Prostate gland (tissue), 2 donors: ENCODE measurements at regions of chr9 and their contacts with region 1.

Region 1: GRCh38 chr9:123401879-123402513 is 46.0 kb downstream of the CRB2 start:
- DNase-seq: no peak
- H3K4me3 ChIP-seq: no peak overlapping the region
- H3K27ac ChIP-seq: peak overlapping the region; percentile 8 to 12
- H3K4me1 ChIP-seq: no peaks in the 10 kb centered on the region
- H3K27me3 ChIP-seq: no peaks in the 10 kb centered on the region
- CTCF ChIP-seq: peak in 3 of 4 experiments; percentile 37 to 60 (median 57)
- POLR2A ChIP-seq: no peak

Region 2: DNA sequence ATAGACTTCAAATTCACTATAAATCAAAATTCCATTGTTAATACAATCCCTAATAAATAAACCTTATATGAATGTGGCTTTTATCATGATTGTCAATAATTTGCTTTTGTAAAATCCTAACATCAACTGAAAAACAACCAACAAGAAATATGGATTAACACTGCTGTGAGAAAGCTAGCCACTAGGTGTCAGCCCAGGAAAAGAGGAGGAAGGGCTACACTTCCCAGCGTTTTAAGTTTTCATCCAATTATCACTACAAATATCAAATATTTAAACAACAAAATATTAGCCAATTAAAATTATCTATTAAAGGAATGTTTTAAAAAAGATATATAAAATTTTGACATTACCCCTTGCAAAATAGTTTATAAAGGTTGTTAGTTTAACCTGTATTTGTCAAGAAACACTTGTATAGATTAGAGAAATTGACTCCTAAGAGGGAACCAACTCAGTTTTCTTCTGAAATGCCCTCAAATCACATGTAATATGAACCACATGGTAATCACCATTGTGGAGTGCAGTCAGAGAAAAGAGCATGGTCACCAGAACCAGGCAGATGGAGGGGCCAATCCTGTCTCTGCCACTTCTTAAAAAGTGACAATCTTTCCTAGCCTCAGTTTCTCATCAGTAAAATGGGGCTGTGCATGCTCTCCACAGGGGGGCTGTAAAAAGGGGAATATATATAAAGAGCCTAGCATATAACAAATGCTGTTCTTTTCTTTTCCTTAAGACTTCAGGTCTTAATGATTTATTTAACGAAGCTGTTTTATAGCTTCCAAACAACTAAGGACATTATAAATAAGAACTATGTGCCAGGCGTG is 142.2 kb after region 1 on chr9:
- intact Hi-C with region 1: loop called (anchors 5 kb)
- DNase-seq: no peak
- H3K4me3 ChIP-seq: no peak overlapping the region
- H3K27ac ChIP-seq: no peak overlapping the region
- H3K4me1 ChIP-seq: no peaks in the 10 kb centered on the region
- H3K27me3 ChIP-seq: no peaks in the 10 kb centered on the region
- CTCF ChIP-seq: peak; percentile 41 to 78 (median 70)
- POLR2A ChIP-seq: no peak

Region 3: GRCh38 chr9:123724211-123724796 is 322.3 kb after region 1 on chr9:
- intact Hi-C with region 1: loop called (anchors 10 kb)
- DNase-seq: no peak
- H3K4me3 ChIP-seq: no peak overlapping the region
- H3K27ac ChIP-seq: no peak overlapping the region
- H3K4me1 ChIP-seq: no peaks in the 10 kb centered on the region
- H3K27me3 ChIP-seq: no peaks in the 10 kb centered on the region
- CTCF ChIP-seq: peak in 1 of 4 experiments; percentile 6
- POLR2A ChIP-seq: no peak